Common myeloid progenitor, CD34-positive (primary cell): ENCODE measurements at regions of chr12 and their contacts with region 1.

Region 1: DNA sequence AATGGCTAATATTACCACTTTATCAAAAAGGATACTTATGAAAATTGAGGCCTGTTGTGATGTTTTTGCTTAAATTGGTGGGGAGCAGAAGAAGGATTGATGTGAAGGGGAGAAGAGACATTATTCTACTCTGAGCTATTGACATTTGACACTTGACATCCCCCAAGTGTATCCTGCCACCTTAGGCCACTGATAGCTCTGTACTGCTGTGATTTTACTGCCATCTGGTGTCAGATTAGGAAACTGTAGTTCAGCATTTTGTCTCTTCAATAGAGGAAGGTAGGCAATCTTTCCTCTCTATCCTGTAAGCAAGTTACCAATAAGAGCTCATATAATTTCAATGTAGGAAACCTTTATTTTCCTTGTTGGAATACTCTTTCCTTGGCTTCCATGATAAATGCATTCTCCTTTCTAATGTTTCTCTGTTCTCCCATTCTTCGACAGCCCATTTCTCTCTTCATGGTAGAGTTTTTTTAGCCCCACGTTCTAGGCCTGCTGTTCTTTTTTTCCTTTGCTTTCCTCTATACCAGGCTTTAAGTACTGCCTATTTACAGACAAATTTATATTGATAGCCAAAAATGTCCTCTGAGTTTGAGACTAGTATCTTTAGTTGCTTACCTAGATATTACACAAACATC is 46.3 kb downstream of the PPHLN1 start:
- DNase-seq: peak; percentile 63 to 81 (median 79)
- H3K4me3 ChIP-seq: no peak overlapping the region
- H3K27ac ChIP-seq: no peak overlapping the region
- H3K4me1 ChIP-seq: no peaks in the 10 kb centered on the region
- H3K27me3 ChIP-seq: no peaks in the 10 kb centered on the region

Region 2: DNA sequence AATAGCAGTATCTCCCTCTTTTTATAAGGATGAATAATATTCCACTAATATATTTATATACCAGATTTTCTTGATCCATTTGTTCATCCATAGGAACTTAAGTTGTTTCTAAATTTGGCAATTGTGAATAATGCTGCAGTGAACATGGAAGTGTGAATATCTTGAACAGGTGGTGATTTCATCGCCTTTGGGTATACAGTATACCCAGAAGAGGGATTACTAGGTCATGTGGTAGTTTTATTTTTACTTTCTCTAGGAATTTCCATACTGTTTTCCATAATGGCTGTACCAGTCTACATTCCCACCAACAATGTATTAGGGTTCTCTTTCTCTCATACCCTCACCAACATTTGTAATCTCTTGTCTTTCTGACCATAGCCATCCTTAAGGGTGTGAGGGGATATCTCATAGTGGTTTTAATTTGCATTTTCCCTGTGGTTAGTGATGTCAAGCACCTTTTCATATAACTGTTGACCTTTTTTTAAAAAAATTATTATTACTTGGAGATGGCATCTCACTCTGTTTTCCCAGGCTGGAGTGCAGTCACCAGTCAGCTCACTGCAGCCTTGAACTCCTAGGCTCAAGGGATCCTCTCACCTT is 25.8 kb before region 1 on chr12:
- CTCF ChIA-PET with region 1: interaction called, 14 read pairs
- POLR2A ChIA-PET with region 1: no interaction called
- DNase-seq: no peak
- H3K4me3 ChIP-seq: no peak overlapping the region
- H3K27ac ChIP-seq: no peak overlapping the region
- H3K4me1 ChIP-seq: no peaks in the 10 kb centered on the region
- H3K27me3 ChIP-seq: no peaks in the 10 kb centered on the region